HCT116 (cell line): ENCODE measurements at regions of chr18 and their contacts with region 1.

Region 1: DNA sequence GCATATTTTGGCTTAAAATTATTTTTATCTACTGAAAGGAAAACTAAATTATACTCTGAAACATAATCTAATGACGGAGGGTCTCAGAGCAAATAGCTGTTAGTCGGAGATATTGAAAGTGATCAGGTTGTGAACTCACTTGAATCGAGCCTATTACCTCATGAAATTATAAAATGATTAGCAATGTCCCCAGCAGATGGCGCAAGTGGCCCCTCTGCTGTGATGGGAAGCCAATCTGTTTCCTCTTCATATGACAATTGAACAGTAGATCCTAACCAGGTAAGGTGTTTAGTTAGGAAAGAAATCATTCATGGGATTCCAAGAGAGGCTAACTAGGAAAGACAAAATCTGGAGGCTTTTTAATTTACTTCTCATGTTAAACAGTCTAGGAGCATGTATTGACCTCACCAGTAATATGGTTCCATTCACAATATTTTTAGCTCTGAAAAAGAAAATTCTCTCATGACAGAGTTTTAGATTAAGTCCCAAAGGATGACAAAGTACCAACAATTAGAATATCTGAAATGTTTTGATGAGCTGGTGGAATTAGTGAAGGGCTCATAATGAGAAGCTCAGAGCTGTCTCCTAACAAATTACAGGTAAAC is 29.9 kb upstream of the MPPE1 start:
- DNase-seq: peak; percentile 54
- ATAC-seq: peak; percentile 73
- H3K4me3 ChIP-seq: no peak overlapping the region
- H3K27ac ChIP-seq: no peak overlapping the region
- H3K4me1 ChIP-seq: peaks cover 5 to 8% of the 10 kb centered on the region in 2 experiments
- H3K27me3 ChIP-seq: no peaks in the 10 kb centered on the region
- CTCF ChIP-seq: peak; percentile 65 to 88 (median 87)
- POLR2A ChIP-seq: no peak
- RAD21 ChIP-seq: peak; percentile 87

Region 2: DNA sequence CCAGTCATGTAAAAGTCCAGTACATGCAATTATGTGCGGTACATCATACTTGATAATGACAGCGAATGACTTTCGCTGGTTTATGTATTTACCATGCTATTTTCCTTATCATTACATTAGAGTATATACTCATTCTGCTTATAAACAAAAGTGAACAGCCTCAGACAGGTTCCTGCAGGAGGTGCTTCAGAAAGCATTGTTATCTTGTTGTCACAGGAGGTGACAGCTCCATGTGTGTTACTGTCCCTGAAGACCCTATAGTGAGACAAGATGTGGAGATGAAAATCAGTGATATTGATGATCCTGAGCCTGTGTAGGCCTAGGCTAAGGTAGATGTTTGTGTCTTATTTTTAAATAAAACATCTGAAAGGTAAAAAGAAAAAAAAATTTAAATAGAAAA is 14.5 kb before region 1 on chr18:
- CTCF ChIA-PET with region 1: interaction called, 22 read pairs
- POLR2A ChIA-PET with region 1: no interaction called
- RAD21 ChIA-PET with region 1: no interaction called
- intact Hi-C with region 1: no loop called
- DNase-seq: no peak
- ATAC-seq: no peak
- H3K4me3 ChIP-seq: no peak overlapping the region
- H3K27ac ChIP-seq: no peak overlapping the region
- H3K4me1 ChIP-seq: 0 out of 4 replicates have a peak, but pooled peaks cover 0 to 2% of the 10 kb centered on the region in 2 experiments
- H3K27me3 ChIP-seq: no peaks in the 10 kb centered on the region; the same call in 1 of the 2 replicates
- CTCF ChIP-seq: no peak
- POLR2A ChIP-seq: no peak
- RAD21 ChIP-seq: no peak

Region 3: DNA sequence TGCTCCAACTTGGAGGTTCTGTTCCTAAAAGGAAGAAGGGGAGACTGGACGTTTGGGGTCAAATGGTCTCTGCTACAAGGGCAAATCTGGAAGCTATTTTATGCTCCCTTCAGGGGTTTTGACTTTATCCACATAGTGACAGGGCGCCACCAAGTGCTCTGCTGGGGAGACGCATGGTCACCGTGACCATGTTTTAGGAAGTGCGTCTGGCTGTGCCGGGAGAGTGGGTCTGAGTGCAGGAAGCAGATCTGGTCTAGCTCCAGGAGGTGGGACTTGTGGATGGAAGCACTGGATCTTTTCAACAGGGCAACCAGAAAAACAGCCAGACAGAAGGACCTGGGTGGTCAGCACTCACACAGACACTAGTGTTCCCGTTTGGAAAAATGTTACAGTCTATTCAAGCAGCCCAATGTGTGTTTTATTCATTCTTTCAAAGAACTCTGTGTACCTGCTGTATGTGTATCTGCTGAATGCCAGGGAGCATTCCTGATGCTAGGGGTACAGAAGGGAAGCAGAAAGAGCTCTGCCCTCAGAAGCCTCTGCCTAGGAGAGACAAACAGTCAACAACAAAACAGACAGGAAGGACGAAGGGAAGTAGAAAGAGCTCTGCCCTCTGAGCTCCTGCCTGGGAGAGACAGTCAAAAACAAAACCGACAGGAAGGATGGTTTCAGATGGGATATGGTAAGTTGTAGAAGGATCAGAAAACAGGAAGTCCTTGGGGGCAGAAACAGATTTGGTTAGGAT is 57.6 kb after region 1 on chr18:
- CTCF ChIA-PET with region 1: interaction called, 162 read pairs
- POLR2A ChIA-PET with region 1: interaction called, 14 read pairs
- RAD21 ChIA-PET with region 1: interaction called, 23 to 25 read pairs
- intact Hi-C with region 1: loop called (anchors 1 kb)
- DNase-seq: peak; percentile 41
- ATAC-seq: peak; percentile 96
- H3K4me3 ChIP-seq: no peak overlapping the region
- H3K27ac ChIP-seq: no peak overlapping the region
- H3K4me1 ChIP-seq: peaks cover 6 to 19% of the 10 kb centered on the region in 2 experiments; a peak in 3 of 4 replicates
- H3K27me3 ChIP-seq: no peaks in the 10 kb centered on the region
- CTCF ChIP-seq: peak; percentile 73 to 89 (median 88)
- POLR2A ChIP-seq: no peak
- RAD21 ChIP-seq: peak; percentile 91

Region 4: GRCh38 chr18:12038639-12039417 is 100.9 kb after region 1 on chr18:
- CTCF ChIA-PET with region 1: interaction called, 48 read pairs
- POLR2A ChIA-PET with region 1: interaction called, 3 read pairs
- RAD21 ChIA-PET with region 1: interaction called, 7 to 12 read pairs
- intact Hi-C with region 1: loop called (anchors 1 kb)
- DNase-seq: peak; percentile 78
- ATAC-seq: peak; percentile 100
- H3K4me3 ChIP-seq: peak overlapping the region; percentile 30 to 49
- H3K27ac ChIP-seq: no peak overlapping the region; the same call in 1 of the 2 replicates
- H3K4me1 ChIP-seq: peaks cover 0 to 12% of the 10 kb centered on the region in 2 experiments; a peak in 2 of 4 replicates
- H3K27me3 ChIP-seq: no peaks in the 10 kb centered on the region
- CTCF ChIP-seq: peak; percentile 87 to 94 (median 91)
- POLR2A ChIP-seq: no peak
- RAD21 ChIP-seq: peak; percentile 96

Region 5: GRCh38 chr18:12317664-12318333 is 379.8 kb after region 1 on chr18:
- CTCF ChIA-PET with region 1: no interaction called
- POLR2A ChIA-PET with region 1: no interaction called
- RAD21 ChIA-PET with region 1: no interaction called
- intact Hi-C with region 1: no loop called
- DNase-seq: no peak
- ATAC-seq: no peak
- H3K4me3 ChIP-seq: no peak overlapping the region
- H3K27ac ChIP-seq: no peak overlapping the region
- H3K4me1 ChIP-seq: no peaks in the 10 kb centered on the region
- H3K27me3 ChIP-seq: no peaks in the 10 kb centered on the region
- CTCF ChIP-seq: no peak
- POLR2A ChIP-seq: no peak
- RAD21 ChIP-seq: no peak